Activated T-helper 2 cell treated with anti-CD3 and anti-CD28 coated beads, Interferon-gamma antibody, Interleukin-2, Interleukin-4, amounts not matched to agents 10 μg/mL and 5 μg/mL and 100 μg/mL, durations not matched to agents 14 hours and 24 hours and 36 hours (primary cell): ENCODE measurements at regions of chr1 and their contacts with region 1.

Region 1: GRCh38 chr1:247331172-247331991 is at the start of gene ZNF496:
- DNase-seq: peak; percentile 69
- H3K4me3 Mint-ChIP-seq: peak within 1 kb of the TSS; percentile 90
- H3K27ac Mint-ChIP-seq: peak within 1 kb of the TSS; percentile 91
- H3K4me1 Mint-ChIP-seq: peaks cover 28% of the 10 kb centered on the region
- H3K27me3 Mint-ChIP-seq: no peaks in the 10 kb centered on the region
- total RNA-seq, gene ZNF496: 19.2 and 19.4 TPM in 2 replicates

Region 2: DNA sequence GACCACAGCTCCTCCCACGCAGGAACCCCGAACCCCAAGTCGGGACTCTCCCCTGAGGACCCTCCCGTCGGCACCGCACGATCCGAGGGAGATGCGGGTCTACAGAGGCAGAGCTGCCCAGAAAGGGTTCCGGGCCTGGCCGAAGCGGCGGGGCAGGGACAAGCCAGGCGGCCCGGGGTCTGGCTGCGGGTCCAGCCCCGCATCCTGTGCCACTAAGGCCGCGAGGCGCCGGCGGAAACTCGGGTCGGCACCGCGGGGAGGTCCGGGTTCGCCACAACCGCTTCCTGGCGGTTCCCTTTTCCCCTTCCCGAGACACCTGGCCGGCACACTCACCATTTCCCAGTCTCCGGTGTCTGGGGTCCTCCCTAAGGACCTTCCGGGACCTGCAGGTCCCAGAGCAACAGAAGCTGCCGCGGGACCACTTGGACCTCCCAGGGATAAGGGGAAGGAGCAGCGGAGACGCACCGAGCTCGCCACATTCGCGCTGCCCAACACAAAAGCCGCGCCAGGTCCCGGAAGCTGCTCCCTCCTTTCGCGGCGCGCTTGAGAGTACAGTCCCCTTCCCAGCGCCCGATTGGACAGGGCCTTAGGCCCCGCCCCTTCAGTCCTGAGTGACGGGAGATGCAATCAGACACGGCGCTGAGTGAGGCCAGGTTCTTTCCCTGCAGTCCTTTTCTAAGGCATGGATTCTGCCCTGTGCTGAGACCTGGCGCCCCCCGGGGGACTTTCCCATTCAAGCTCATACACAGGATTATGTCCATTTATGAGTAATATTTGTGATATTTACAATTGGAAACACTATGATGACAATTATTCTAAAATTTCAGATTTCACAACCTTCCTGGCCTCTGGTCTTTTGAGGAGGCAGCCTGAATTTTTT is 252.9 kb before region 1 on chr1 and contains the start of gene ZNF670:
- intact Hi-C with region 1: loop called (anchors 1 kb)
- DNase-seq: peak; percentile 84
- H3K4me3 Mint-ChIP-seq: peak within 1 kb of the TSS; percentile 88
- H3K27ac Mint-ChIP-seq: peak within 1 kb of the TSS; percentile 84
- H3K4me1 Mint-ChIP-seq: peaks cover 20% of the 10 kb centered on the region
- H3K27me3 Mint-ChIP-seq: peaks cover 5% of the 10 kb centered on the region
- total RNA-seq, gene ZNF670: 2.3 and 3.0 TPM in 2 replicates

Region 3: DNA sequence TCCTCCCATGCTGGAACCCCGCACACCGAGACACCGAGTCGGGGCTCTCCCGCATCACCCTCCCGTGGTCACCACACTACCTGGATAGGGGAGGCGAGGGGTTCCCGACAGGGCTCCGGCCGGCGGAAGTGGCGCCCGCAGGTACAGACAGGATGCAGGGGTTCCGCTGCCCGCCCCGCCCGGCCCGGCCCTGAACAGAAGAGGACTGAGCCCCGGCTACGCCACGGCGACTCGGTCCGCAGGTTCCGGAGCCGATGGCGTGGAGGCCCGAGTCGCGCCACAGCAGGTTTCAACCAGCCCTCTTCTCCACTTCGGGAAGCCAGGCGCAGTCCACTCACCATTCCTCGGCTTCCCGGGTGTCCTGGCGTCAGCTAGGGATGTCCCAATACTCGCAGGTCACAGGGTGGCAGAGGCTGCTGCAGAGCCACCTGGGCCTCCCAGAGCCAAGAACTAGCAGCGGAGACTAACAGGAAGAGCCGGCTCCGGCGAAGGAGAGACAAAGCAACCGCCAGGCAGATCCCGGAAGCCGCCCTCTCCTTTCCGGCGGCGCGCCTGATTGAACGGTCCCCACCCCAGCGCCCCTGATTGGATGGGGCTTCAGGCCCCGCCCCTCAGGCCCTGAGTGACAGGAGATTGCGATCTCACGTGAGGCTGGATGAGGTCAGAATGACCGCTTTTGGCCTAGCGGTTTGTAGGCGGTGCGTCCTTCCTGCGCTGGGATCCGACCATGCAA is 227.4 kb before region 1 on chr1 and contains the start of gene ZNF669:
- intact Hi-C with region 1: loop called (anchors 10 kb)
- DNase-seq: peak; percentile 88
- H3K4me3 Mint-ChIP-seq: peak within 1 kb of the TSS; percentile 91
- H3K27ac Mint-ChIP-seq: peak within 1 kb of the TSS; percentile 82
- H3K4me1 Mint-ChIP-seq: peaks cover 5% of the 10 kb centered on the region
- H3K27me3 Mint-ChIP-seq: peaks cover 29% of the 10 kb centered on the region
- total RNA-seq, gene ZNF669: 8.2 and 8.7 TPM in 2 replicates

Region 4: GRCh38 chr1:247210376-247211117 is 120.8 kb before region 1 on chr1:
- intact Hi-C with region 1: loop called (anchors 1 kb)
- DNase-seq: peak; percentile 94
- H3K4me3 Mint-ChIP-seq: peak overlapping the region; percentile 86
- H3K27ac Mint-ChIP-seq: peak overlapping the region; percentile 93
- H3K4me1 Mint-ChIP-seq: peaks cover 48% of the 10 kb centered on the region
- H3K27me3 Mint-ChIP-seq: no peaks in the 10 kb centered on the region

Region 5: DNA sequence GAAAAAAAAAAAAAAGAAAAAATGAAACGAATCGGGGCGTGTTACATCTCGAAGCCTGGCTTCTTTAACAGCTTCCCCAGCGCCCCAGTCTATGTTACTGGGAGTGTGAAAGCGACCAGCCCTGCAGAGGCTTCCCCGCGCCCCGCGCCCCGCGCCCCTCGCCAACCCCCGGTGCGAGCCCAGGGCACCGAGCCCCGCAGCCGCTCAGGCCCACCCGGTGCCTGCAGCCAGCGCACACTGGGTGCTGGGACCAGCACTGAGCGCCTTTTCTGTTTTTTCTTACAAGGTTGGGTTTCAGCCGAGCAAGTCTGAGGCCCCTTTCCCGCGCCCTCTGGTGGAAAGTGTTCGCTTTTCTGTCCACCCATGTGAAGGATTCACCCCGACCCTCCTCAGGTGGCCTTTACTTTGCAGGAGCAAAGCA is 42.3 kb after region 1 on chr1:
- intact Hi-C with region 1: loop called (anchors 5 kb)
- DNase-seq: peak; percentile 44
- H3K4me3 Mint-ChIP-seq: no peak overlapping the region
- H3K27ac Mint-ChIP-seq: no peak overlapping the region
- H3K4me1 Mint-ChIP-seq: no peaks in the 10 kb centered on the region
- H3K27me3 Mint-ChIP-seq: peaks cover 14% of the 10 kb centered on the region

Region 6: GRCh38 chr1:247407180-247407616 is 75.8 kb after region 1 on chr1:
- intact Hi-C with region 1: loop called (anchors 5 kb)
- DNase-seq: peak; percentile 53
- H3K4me3 Mint-ChIP-seq: peak overlapping the region; percentile 28
- H3K27ac Mint-ChIP-seq: peak overlapping the region; percentile 16
- H3K4me1 Mint-ChIP-seq: peaks cover 36% of the 10 kb centered on the region
- H3K27me3 Mint-ChIP-seq: peaks cover 35% of the 10 kb centered on the region

Region 7: DNA sequence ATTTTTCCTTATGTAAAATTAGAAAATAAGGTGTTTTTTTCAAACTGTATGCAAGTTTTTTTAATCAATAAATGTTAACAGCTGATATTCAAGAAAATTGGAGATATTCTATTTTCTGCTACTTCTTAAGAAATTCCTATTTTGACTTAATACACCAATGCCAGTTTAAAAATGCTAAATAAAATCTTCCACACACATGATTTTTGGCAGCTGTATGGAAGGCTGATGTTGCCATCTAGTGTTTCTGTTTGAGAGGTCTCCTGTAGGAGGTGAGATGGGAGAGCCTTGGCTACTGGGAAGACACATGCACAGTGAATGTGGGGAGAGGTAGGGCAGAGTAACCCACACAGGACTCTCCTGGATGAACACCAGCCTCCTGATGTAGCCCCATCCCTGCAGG is 155.7 kb after region 1 on chr1:
- intact Hi-C with region 1: no loop called
- DNase-seq: no peak
- H3K4me3 Mint-ChIP-seq: no peak overlapping the region
- H3K27ac Mint-ChIP-seq: no peak overlapping the region
- H3K4me1 Mint-ChIP-seq: no peaks in the 10 kb centered on the region
- H3K27me3 Mint-ChIP-seq: peaks cover 6% of the 10 kb centered on the region